CD8-positive, alpha-beta T cell (primary cell): ENCODE measurements at regions of chr15 and their contacts with region 1.

Region 1: GRCh38 chr15:28228096-28228495 is 93.9 kb downstream of the HERC2 start:
- DNase-seq: no peak
- ATAC-seq: no peak
- H3K4me3 ChIP-seq: no peak overlapping the region
- H3K4me3 Mint-ChIP-seq: no peak overlapping the region
- H3K27ac ChIP-seq: no peak overlapping the region
- H3K27ac Mint-ChIP-seq: no peak overlapping the region
- H3K4me1 ChIP-seq: no peaks in the 10 kb centered on the region
- H3K4me1 Mint-ChIP-seq: no peaks in the 10 kb centered on the region
- H3K27me3 ChIP-seq: no peaks in the 10 kb centered on the region
- H3K27me3 Mint-ChIP-seq: no peaks in the 10 kb centered on the region
- CTCF ChIP-seq: no peak

Region 2: GRCh38 chr15:28086175-28086703 is 141.9 kb before region 1 on chr15:
- CTCF ChIA-PET with region 1: no interaction called
- POLR2A ChIA-PET with region 1: no interaction called
- intact Hi-C with region 1: no loop called
- DNase-seq: peak in 8 of 9 experiments; percentile 45 to 79 (median 64)
- ATAC-seq: peak; percentile 100
- H3K4me3 ChIP-seq: no peak overlapping the region
- H3K4me3 Mint-ChIP-seq: no peak overlapping the region
- H3K27ac ChIP-seq: no peak overlapping the region
- H3K27ac Mint-ChIP-seq: no peak overlapping the region
- H3K4me1 ChIP-seq: no peaks in the 10 kb centered on the region
- H3K4me1 Mint-ChIP-seq: peaks cover 6% of the 10 kb centered on the region
- H3K27me3 ChIP-seq: peaks cover 0 to 2% of the 10 kb centered on the region in 2 experiments
- H3K27me3 Mint-ChIP-seq: peaks cover 40% of the 10 kb centered on the region
- CTCF ChIP-seq: peak; percentile 67

Region 3: DNA sequence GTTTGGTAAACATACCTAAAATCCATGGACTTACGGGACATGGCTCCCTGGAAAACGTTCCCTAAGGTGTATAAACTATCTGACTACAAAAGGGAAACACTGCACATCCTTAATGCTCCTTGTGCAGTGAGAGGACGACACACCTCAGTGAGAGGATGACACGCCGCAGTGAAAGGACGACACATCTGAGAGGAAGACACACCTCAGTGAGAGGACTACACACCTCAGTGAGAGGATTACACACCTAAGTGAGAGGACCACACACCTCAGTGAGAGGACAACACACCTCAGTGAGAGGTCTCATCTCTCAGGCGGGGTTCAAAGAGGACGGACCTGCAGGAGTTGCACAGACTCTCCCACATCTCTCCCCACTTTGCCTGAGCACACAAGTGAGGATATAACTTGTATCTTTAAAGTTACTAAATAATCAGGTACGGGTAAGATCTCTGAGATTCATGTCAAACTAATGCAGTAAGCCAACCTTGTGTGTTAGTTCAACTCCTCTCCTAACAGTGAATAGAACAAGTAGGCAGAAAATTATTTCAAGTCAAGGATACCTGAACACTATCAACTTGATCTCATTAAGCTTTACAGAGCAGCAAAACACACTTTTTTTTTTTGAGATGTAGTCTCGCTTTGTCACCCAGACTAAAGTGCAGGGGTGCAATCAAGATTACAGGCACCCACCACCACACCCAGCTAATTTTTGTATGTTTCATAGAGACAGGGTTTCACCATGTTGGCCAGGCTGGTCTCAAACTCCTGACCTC is 61.8 kb after region 1 on chr15:
- CTCF ChIA-PET with region 1: no interaction called
- POLR2A ChIA-PET with region 1: no interaction called
- intact Hi-C with region 1: loop called in 1 of 2 experiments (anchors 10 kb)
- DNase-seq: no peak
- ATAC-seq: no peak
- H3K4me3 ChIP-seq: no peak overlapping the region
- H3K4me3 Mint-ChIP-seq: no peak overlapping the region
- H3K27ac ChIP-seq: no peak overlapping the region
- H3K27ac Mint-ChIP-seq: no peak overlapping the region
- H3K4me1 ChIP-seq: no peaks in the 10 kb centered on the region
- H3K4me1 Mint-ChIP-seq: peaks cover 10% of the 10 kb centered on the region
- H3K27me3 ChIP-seq: no peaks in the 10 kb centered on the region
- H3K27me3 Mint-ChIP-seq: no peaks in the 10 kb centered on the region
- CTCF ChIP-seq: no peak